GM12878 (cell line): ENCODE measurements at regions of chr1 and their contacts with region 1.

Region 1: DNA sequence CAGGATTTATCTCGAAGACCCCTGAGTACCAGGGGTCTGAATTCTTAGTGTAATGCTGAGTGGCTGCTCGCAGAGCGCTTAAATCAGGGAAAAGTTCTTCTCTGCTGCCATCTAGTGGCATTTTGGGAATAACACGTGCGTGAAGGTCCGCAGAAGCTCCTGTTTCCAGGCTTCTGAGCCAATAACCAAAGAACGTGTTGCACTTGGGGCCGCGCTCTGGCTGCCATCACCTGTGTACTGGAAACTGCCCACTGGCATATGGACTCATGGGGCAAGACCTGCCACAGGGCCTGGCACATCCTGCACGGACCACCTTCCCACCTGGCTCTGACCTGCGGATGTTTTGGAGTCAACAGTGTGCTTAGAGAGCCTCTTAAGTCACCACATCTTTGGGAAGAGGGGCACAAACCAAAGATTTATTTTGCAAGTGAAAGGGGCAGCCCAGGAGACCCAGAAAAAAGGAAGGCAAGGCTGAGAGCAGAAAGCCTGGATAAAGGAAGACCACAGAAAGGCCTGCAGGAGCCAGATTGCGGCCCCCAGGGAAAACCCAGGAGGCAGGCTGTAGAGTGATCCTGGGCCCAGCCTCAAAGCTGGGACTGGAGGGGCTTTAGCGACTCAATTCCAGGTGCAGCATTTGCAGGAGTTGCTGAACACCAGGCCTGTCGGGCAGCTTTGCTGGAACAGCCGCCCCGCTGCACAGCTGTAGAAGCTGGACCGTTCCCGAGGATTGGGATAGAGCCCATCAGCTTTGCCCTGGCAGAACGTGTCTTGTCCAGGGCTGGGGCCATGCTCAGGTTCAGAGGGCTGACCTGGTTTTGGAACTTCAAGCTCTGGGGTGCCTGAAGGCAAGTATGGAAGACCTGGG is 13.0 kb downstream of the CHIT1 start:
- DNase-seq: peak; percentile 17
- ATAC-seq: peak; percentile 92
- H3K4me3 ChIP-seq: no peak overlapping the region
- H3K27ac ChIP-seq: no peak overlapping the region
- H3K4me1 ChIP-seq: no peaks in the 10 kb centered on the region
- H3K27me3 ChIP-seq: peaks cover 0 to 5% of the 10 kb centered on the region in 2 experiments; a peak in 1 of 4 replicates
- CTCF ChIP-seq: peak; percentile 63 to 90 (median 64); a peak in 5 of 6 replicates
- EP300 ChIP-seq: no peak
- POLR2A ChIP-seq: no peak
- RAD21 ChIP-seq: peak; percentile 78

Region 2: DNA sequence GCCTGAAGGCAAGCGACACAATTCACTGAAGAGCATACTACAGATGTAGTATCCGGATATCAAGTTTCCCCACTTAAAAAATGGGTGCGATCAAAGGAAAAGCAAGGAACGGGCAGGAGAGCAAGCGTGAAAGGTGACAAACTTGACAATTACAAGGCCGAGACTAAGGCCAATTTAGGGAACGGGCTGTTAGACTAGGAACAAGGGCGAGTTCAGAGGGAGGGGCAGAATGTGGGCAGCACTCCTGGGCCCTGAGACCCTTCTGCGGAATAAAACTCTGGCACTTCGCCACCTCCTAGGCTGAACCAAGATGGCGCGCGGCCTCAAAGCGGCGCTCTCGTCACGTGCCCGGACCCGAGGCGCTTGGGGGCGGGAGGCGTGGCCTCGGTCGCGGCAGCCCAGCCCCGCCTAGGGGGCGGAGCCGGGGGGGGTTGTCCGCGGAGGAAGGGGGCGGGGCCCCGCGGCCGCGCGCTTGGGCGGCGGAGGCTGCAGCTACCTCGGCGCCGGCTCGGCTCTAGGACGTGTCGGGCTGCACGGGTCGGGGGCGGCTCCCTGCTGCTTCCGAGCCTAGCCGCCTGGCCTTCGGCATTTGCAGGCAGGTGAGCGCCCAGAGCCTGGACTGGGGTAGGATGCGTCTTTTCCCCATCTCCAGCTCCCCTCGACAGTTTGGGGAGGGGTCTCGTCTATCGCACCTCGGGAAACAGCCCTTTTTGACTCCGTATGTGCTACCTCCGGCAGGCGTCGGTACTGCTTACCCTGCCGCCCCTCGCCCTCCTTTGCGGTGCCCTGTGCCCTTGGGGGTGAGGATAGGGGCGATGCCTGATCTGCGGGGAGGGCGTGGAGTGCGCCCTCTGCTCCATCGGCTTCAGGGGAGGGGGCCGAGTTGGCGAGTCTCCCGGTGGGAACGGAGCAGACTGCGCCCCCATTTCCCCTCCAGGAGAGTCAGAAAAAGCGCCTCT is 190.2 kb before region 1 on chr1 and contains the start of gene PPFIA4:
- CTCF ChIA-PET with region 1: interaction called, 11 read pairs
- POLR2A ChIA-PET with region 1: no interaction called
- RAD21 ChIA-PET with region 1: no interaction called
- SMC1A ChIA-PET with region 1: interaction called, 3 read pairs
- in situ Hi-C with region 1: no loop called
- intact Hi-C with region 1: no loop called
- DNase-seq: peak; percentile 42
- ATAC-seq: peak; percentile 96
- H3K4me3 ChIP-seq: peak within 1 kb of the TSS; percentile 93
- H3K27ac ChIP-seq: no peak within 1 kb of the TSS
- H3K4me1 ChIP-seq: no peaks in the 10 kb centered on the region; the same call in none of the 2 replicates
- H3K27me3 ChIP-seq: no peaks in the 10 kb centered on the region; a peak in 2 of 4 replicates
- CTCF ChIP-seq: peak in 1 of 3 experiments; percentile 24; a peak in 1 of 6 replicates
- EP300 ChIP-seq: no peak
- POLR2A ChIP-seq: peak; percentile 64
- RAD21 ChIP-seq: no peak
- polyA plus RNA-seq, gene PPFIA4: 0.02 to 0.11 TPM

Region 3: GRCh38 chr1:203084588-203085502 is 131.7 kb before region 1 on chr1:
- CTCF ChIA-PET with region 1: interaction called, 35 read pairs
- POLR2A ChIA-PET with region 1: no interaction called
- RAD21 ChIA-PET with region 1: interaction called, 16 read pairs
- SMC1A ChIA-PET with region 1: interaction called, 3 read pairs
- in situ Hi-C with region 1: no loop called
- intact Hi-C with region 1: no loop called
- DNase-seq: no peak
- ATAC-seq: peak; percentile 75
- H3K4me3 ChIP-seq: no peak overlapping the region
- H3K27ac ChIP-seq: no peak overlapping the region
- H3K4me1 ChIP-seq: no peaks in the 10 kb centered on the region
- H3K27me3 ChIP-seq: peaks cover 0 to 3% of the 10 kb centered on the region in 2 experiments; a peak in 2 of 4 replicates
- CTCF ChIP-seq: peak; percentile 39 to 73 (median 58)
- EP300 ChIP-seq: no peak
- POLR2A ChIP-seq: no peak
- RAD21 ChIP-seq: peak; percentile 51

Region 4: GRCh38 chr1:203166566-203166940 is 50.0 kb before region 1 on chr1:
- CTCF ChIA-PET with region 1: interaction called, 114 read pairs
- POLR2A ChIA-PET with region 1: interaction called, 4 read pairs
- RAD21 ChIA-PET with region 1: interaction called, 61 read pairs
- SMC1A ChIA-PET with region 1: interaction called, 35 read pairs
- in situ Hi-C with region 1: no loop called
- intact Hi-C with region 1: loop called (anchors 1 kb)
- DNase-seq: no peak
- ATAC-seq: peak; percentile 95
- H3K4me3 ChIP-seq: no peak overlapping the region
- H3K27ac ChIP-seq: no peak overlapping the region
- H3K4me1 ChIP-seq: no peaks in the 10 kb centered on the region
- H3K27me3 ChIP-seq: peaks cover 0 to 3% of the 10 kb centered on the region in 2 experiments; a peak in 3 of 4 replicates
- CTCF ChIP-seq: peak; percentile 24 to 60 (median 48); a peak in 3 of 6 replicates
- EP300 ChIP-seq: no peak
- POLR2A ChIP-seq: no peak
- RAD21 ChIP-seq: peak; percentile 30; the same call in 1 of the 2 replicates

Region 5: DNA sequence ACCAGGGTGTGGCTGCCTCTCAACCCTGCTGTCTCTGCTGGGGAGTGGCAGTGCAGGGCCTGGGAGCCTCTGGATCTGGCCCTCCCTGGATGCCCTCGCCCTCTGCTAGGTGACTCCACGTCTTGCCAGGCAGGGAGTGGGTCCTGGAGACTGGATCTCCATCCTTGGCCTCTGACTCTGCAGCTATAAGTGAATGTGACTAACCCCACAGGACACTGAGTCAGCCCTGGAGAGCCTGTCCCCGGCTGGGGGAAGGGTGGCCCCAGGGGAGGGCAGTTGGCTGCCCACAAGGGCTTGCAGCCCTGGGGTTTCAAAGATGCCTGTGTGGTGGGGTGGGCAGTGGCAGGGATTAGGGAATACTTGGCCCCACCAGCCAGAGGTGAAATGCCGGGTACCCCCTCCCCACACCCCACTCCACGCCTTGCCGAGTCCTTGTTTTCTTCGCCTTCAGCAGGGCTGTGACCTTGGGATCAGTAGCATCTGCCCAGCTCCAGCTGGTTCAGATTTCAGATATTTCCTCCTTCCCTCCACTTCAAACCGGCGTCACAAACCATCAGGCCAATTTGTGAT is 39.0 kb before region 1 on chr1:
- CTCF ChIA-PET with region 1: interaction called, 39 read pairs
- POLR2A ChIA-PET with region 1: no interaction called
- RAD21 ChIA-PET with region 1: interaction called, 35 read pairs
- SMC1A ChIA-PET with region 1: interaction called, 28 read pairs
- in situ Hi-C with region 1: no loop called
- intact Hi-C with region 1: loop called (anchors 2 kb)
- DNase-seq: no peak
- ATAC-seq: no peak
- H3K4me3 ChIP-seq: no peak overlapping the region
- H3K27ac ChIP-seq: no peak overlapping the region
- H3K4me1 ChIP-seq: peaks cover 7% of the 10 kb centered on the region; the same call in 1 of the 2 replicates
- H3K27me3 ChIP-seq: no peaks in the 10 kb centered on the region; a peak in 2 of 4 replicates
- CTCF ChIP-seq: no peak
- EP300 ChIP-seq: no peak
- POLR2A ChIP-seq: no peak
- RAD21 ChIP-seq: no peak

Region 6: DNA sequence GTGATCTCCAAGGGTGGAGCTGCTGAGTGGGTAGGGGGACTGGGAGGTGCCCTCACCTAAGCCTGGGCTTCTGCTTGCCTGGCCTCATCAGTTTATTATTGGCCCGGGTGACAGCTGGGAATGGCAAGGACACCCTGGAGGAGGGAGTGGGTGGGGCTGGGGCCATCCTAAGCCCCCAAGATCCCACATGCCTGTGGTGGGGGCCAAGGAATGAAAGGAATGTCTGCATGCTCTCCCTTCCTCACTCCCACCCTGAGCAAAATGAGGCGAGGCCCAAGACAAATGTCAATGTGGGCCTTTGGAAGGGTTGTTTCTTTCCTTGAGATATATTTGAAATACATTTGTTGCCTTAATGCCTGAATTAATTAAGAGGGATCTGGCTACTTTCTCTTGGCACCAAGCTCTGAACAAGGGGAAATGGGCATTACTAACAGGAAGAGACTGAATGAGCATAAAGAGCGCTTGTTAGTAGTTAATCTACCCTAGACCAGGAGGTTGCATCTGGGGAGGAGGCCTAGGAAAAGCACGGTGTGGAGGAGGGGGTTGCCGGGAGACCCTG is 10.3 kb before region 1 on chr1:
- CTCF ChIA-PET with region 1: interaction called, 21 read pairs
- POLR2A ChIA-PET with region 1: no interaction called
- RAD21 ChIA-PET with region 1: interaction called, 3 read pairs
- SMC1A ChIA-PET with region 1: interaction called, 3 read pairs
- in situ Hi-C with region 1: no loop called
- intact Hi-C with region 1: no loop called
- DNase-seq: no peak
- ATAC-seq: no peak
- H3K4me3 ChIP-seq: no peak overlapping the region
- H3K27ac ChIP-seq: no peak overlapping the region
- H3K4me1 ChIP-seq: no peaks in the 10 kb centered on the region
- H3K27me3 ChIP-seq: no peaks in the 10 kb centered on the region; a peak in 3 of 4 replicates
- CTCF ChIP-seq: no peak
- EP300 ChIP-seq: no peak
- POLR2A ChIP-seq: no peak
- RAD21 ChIP-seq: no peak